Activated CD4-positive, alpha-beta T cell treated with anti-CD3 and anti-CD28 coated beads for 36 hours (primary cell): ENCODE measurements at regions of chr14 and their contacts with region 1.

Region 1: GRCh38 chr14:106665814-106666213 is 1139.4 kb downstream of the TMEM121 start:
- DNase-seq: peak; percentile 75
- ATAC-seq: no peak
- H3K4me3 Mint-ChIP-seq: no peak overlapping the region
- H3K27ac Mint-ChIP-seq: no peak overlapping the region
- H3K4me1 Mint-ChIP-seq: peaks cover 23% of the 10 kb centered on the region
- H3K27me3 Mint-ChIP-seq: peaks cover 4% of the 10 kb centered on the region

Region 2: DNA sequence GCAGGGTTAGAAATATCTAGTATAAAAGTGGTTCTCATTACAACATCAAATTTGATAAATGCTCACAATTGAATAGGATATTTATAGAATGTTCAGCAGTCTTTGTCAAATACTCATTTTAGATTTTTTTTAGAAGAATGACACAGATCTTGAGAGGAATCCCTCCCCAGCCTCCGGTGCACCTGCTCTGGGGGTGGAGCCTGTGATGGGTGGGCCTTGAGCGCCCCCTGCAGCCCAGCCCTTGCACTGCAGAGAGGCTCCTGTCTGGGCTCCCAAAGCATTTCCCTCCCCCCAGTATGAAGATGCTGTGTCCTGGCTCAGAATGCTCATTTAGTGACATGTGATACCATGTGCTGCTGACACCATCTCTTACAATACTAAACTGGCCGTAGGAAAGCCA is 347.1 kb before region 1 on chr14:
- CTCF ChIA-PET with region 1: no interaction called
- POLR2A ChIA-PET with region 1: no interaction called
- intact Hi-C with region 1: no loop called
- DNase-seq: peak; percentile 83
- ATAC-seq: peak; percentile 80
- H3K4me3 Mint-ChIP-seq: no peak overlapping the region
- H3K27ac Mint-ChIP-seq: no peak overlapping the region
- H3K4me1 Mint-ChIP-seq: no peaks in the 10 kb centered on the region
- H3K27me3 Mint-ChIP-seq: no peaks in the 10 kb centered on the region

Region 3: DNA sequence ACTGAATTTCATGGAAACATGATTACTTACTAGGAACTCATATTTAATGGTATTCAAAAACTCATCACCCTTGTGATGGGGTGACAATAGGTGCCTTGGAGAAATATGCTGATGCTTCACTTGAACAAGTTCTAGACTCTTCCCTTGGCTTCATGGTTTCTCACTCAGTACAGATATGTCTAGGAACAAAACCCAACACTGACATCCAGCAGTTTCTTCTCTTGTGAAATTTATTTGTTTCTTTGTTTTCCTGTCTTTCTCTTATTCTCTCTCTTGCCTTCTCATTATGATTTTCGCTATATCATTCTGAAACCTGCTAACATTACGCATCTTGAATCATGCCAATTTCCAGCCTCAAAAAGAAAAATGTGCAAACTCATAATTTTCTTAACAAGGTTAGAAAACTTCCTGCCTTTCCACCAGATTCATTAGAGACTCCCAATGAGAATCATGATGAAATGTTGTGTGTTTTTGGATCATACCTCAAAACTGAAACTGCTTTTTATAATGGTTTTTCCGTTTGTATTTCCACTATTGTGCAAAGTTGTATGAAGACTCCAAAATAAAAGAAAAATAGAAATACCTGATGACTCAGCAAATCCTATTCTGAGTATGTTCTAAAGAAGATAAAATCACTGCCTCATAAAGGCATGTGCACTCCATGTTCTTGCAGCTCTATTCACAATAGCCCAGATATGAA is 117.9 kb before region 1 on chr14:
- CTCF ChIA-PET with region 1: no interaction called
- POLR2A ChIA-PET with region 1: no interaction called
- intact Hi-C with region 1: no loop called
- DNase-seq: no peak
- ATAC-seq: peak; percentile 70
- H3K4me3 Mint-ChIP-seq: no peak overlapping the region
- H3K27ac Mint-ChIP-seq: peak overlapping the region; percentile 1
- H3K4me1 Mint-ChIP-seq: peaks cover 10% of the 10 kb centered on the region
- H3K27me3 Mint-ChIP-seq: peaks cover 12% of the 10 kb centered on the region

Region 4: DNA sequence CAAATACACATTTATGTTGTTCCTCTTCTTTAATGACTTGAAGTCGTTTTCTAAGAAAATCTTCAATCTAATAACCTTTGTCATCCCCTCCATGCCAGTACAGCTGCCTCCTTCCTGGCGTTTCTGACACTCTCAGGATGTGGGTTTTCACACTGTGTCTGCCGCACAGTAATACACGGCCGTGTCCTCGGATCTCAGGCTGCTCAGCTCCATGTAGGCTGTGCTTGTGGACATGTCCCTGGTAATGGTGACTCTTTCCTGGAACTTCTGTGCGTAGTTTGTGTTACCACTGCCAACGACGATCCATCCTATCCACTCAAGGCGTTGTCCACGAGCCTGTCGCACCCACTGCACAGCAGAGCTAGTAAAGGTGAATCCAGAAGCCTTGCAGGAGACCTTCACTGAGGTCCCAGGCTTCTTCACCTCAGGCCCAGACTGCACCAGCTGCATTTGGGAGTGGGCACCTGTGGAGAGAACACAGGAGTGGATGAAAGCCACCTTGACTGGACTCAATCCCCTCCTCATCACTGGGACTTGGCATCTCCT is 43.5 kb before region 1 on chr14:
- CTCF ChIA-PET with region 1: interaction called, 19 read pairs
- POLR2A ChIA-PET with region 1: no interaction called
- intact Hi-C with region 1: no loop called
- DNase-seq: peak; percentile 52
- ATAC-seq: peak; percentile 27
- H3K4me3 Mint-ChIP-seq: no peak overlapping the region
- H3K27ac Mint-ChIP-seq: no peak overlapping the region
- H3K4me1 Mint-ChIP-seq: peaks cover 13% of the 10 kb centered on the region
- H3K27me3 Mint-ChIP-seq: peaks cover 24% of the 10 kb centered on the region

Region 5: DNA sequence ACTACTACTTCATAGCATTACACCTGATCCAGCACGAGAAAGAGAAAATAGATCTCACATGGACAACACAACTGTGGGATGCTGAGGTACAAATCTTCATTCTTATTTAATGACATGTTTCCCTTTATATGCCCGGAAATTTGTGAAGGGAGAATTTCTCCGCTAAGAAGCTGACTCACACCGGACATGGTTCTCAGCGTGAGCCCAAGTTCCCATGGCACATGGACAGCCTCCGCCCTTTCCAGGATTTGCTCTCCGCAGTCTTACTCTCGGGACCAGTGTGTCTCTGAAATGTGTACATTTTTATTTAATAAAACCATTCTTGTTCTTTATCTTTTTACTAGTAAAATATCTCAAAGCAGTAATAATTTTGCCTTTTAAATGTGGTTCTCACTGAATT is 15.3 kb after region 1 on chr14:
- CTCF ChIA-PET with region 1: interaction called, 106 read pairs
- POLR2A ChIA-PET with region 1: interaction called, 3 read pairs
- intact Hi-C with region 1: no loop called
- DNase-seq: no peak
- ATAC-seq: no peak
- H3K4me3 Mint-ChIP-seq: no peak overlapping the region
- H3K27ac Mint-ChIP-seq: no peak overlapping the region
- H3K4me1 Mint-ChIP-seq: no peaks in the 10 kb centered on the region
- H3K27me3 Mint-ChIP-seq: peaks cover 4% of the 10 kb centered on the region

Region 6: GRCh38 chr14:106686533-106686932 is 20.7 kb after region 1 on chr14:
- CTCF ChIA-PET with region 1: interaction called, 27 read pairs
- POLR2A ChIA-PET with region 1: no interaction called
- intact Hi-C with region 1: loop called in 1 of 2 experiments (anchors 1 kb)
- DNase-seq: no peak
- ATAC-seq: no peak
- H3K4me3 Mint-ChIP-seq: no peak overlapping the region
- H3K27ac Mint-ChIP-seq: no peak overlapping the region
- H3K4me1 Mint-ChIP-seq: peaks cover 13% of the 10 kb centered on the region
- H3K27me3 Mint-ChIP-seq: peaks cover 2% of the 10 kb centered on the region

Region 7: DNA sequence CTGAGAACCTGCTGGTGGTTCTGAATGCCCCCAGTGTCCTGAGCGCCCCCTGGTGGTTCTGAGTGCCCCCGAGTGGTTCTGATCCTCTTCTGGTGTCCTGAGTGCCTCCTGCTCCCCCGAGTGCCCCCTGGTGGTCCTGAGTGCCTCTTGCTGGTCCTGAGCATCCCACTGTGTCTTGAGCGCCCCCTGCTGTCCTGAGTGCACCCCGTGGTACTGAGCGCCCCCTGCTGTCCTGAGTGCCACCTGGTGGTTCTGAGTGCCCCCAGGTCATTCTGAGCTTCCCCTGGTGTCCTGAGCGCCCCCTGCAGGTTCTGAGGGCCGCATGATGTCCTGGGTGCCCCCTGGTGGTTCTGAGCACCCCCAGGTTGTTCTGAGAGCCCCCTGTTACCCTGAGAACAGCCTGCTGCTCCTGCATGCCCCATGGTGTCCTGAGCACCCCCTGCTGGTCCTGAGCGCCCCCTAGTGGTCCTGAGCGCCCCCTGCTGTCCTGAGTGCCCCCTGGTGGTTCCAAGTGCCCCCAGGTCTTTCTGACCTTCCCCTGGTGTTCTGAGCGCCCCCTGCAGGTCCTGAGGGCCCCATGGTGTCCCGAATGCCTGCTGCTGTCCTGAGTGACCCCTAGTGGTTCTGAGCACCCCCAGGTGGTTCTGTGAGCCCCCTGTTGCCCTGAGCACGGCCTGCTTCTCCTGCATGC is 25.9 kb after region 1 on chr14:
- CTCF ChIA-PET with region 1: interaction called, 27 read pairs
- POLR2A ChIA-PET with region 1: no interaction called
- intact Hi-C with region 1: loop called in 1 of 2 experiments (anchors 1 kb)
- DNase-seq: peak; percentile 94
- ATAC-seq: peak; percentile 77
- H3K4me3 Mint-ChIP-seq: no peak overlapping the region
- H3K27ac Mint-ChIP-seq: no peak overlapping the region
- H3K4me1 Mint-ChIP-seq: peaks cover 20% of the 10 kb centered on the region
- H3K27me3 Mint-ChIP-seq: no peaks in the 10 kb centered on the region

Region 8: DNA sequence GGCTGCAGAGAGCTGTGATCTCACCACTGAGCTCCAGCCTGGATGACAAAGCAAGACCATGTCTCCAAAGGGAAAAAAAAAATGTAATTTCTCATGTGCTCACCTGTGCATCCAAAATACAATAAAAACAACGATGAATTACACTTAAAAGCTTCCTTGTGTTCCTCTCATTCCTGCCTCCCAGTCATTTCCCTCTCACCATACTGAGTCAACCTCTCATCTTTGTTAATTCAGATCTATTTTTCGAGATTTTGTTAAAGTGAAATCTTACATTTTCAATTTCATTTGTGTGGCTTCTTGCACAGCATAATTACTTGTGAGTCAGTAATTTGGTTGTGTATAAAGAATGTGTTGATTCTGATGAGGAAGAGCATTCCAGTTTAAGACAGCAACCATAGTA is 63.7 kb after region 1 on chr14:
- CTCF ChIA-PET with region 1: no interaction called
- POLR2A ChIA-PET with region 1: no interaction called
- intact Hi-C with region 1: no loop called
- DNase-seq: no peak
- ATAC-seq: peak; percentile 42
- H3K4me3 Mint-ChIP-seq: no peak overlapping the region
- H3K27ac Mint-ChIP-seq: no peak overlapping the region
- H3K4me1 Mint-ChIP-seq: peaks cover 14% of the 10 kb centered on the region
- H3K27me3 Mint-ChIP-seq: no peaks in the 10 kb centered on the region